ENCODE measurements at regions of chr10 and their contacts with region 1.

Region 1: GRCh38 chr10:38094158-38094920 is at the start of gene ZNF37A:
- DNase-seq: peak; percentile 94
- H3K4me3 Mint-ChIP-seq: peak within 1 kb of the TSS; percentile 84
- H3K27ac Mint-ChIP-seq: peak within 1 kb of the TSS; percentile 81
- H3K4me1 Mint-ChIP-seq: peaks cover 22% of the 10 kb centered on the region
- H3K27me3 Mint-ChIP-seq: no peaks in the 10 kb centered on the region
- total RNA-seq, gene ZNF37A: 19.0 to 21.0 TPM

Region 2: GRCh38 chr10:36888929-36889573 is 1205.3 kb before region 1 on chr10:
- CTCF ChIA-PET with region 1: no interaction called
- POLR2A ChIA-PET with region 1: no interaction called
- intact Hi-C with region 1: loop called (anchors 5 kb)
- DNase-seq: peak; percentile 62
- H3K4me3 Mint-ChIP-seq: no peak overlapping the region
- H3K27ac Mint-ChIP-seq: no peak overlapping the region
- H3K4me1 Mint-ChIP-seq: no peaks in the 10 kb centered on the region
- H3K27me3 Mint-ChIP-seq: no peaks in the 10 kb centered on the region

Region 3: DNA sequence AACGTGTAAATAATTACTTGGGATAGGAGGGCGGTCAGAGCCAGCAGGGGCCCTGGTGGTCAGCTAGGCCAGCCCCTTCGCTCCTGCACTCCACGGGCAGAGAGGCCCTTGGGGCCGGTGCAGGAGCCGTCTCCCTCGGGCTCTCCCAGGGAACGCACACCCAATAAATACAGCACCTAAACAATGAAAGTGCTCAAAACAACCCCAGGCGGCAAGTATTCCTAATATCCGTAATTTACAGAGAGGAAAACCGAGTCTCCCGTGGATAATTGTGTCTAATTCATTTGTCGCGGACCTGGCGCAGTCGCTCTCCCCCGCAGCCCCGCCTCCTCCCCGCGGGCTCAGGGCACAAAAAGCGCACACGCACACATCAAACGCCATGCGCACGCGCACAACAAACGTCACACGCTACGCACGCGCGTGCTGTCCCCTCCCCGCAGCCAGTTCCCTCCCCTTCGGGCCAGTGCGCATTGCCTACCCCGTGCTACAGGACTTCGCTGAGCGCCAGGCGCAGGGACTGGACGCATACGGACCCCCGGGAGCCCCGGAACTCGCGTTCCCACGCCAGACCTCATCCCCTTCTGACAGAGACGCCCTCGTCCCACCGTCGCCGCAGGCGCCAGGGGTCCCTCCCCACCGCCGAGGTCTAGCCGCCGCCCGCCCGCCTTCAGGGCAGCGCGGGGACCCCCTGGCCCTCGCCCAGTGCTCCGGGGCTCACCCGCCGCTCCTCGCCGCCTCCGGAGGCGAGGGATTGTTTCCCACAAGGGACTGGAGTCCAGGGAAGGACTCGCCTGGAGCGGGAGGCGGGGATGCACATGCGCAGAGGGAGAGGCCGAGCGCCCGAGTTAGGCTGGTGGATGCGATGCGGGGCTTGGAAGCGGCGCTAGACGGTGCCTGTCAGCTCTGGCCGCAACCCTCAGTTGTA is 236.8 kb before region 1 on chr10 and contains the start of gene ZNF248:
- CTCF ChIA-PET with region 1: no interaction called
- POLR2A ChIA-PET with region 1: no interaction called
- intact Hi-C with region 1: loop called (anchors 1 kb)
- DNase-seq: peak; percentile 95
- H3K4me3 Mint-ChIP-seq: peak within 1 kb of the TSS; percentile 96
- H3K27ac Mint-ChIP-seq: peak within 1 kb of the TSS; percentile 94
- H3K4me1 Mint-ChIP-seq: peaks cover 37% of the 10 kb centered on the region
- H3K27me3 Mint-ChIP-seq: peaks cover 1% of the 10 kb centered on the region
- total RNA-seq, gene ZNF248: 6.1 to 7.4 TPM

Region 4: DNA sequence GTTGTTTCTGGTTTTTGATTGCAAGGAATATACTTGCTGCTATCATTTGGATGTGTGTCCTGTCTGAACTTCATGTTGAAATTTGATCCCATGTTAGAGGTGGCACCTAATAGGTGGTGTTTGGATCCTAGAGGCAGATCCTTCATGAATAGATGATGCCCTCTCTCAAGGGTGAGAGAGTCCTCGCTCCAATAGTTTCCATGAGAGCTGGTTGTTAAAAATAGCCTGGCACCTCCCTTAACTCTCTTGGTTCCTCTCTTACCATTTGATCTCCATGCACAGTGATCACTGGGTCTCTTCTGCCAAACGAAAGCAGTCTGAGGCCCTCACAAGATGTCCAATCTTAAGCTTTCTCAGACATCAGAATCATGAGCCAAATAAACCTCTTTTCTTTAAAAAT is 188.0 kb before region 1 on chr10:
- CTCF ChIA-PET with region 1: no interaction called
- POLR2A ChIA-PET with region 1: no interaction called
- intact Hi-C with region 1: no loop called
- DNase-seq: no peak
- H3K4me3 Mint-ChIP-seq: no peak overlapping the region
- H3K27ac Mint-ChIP-seq: no peak overlapping the region
- H3K4me1 Mint-ChIP-seq: no peaks in the 10 kb centered on the region
- H3K27me3 Mint-ChIP-seq: no peaks in the 10 kb centered on the region

Region 5: GRCh38 chr10:37976091-37976879 is 118.1 kb before region 1 on chr10 and contains the start of gene ZNF25:
- CTCF ChIA-PET with region 1: interaction called, 17 read pairs
- POLR2A ChIA-PET with region 1: interaction called, 4 read pairs
- intact Hi-C with region 1: loop called (anchors 1 kb)
- DNase-seq: peak; percentile 99
- H3K4me3 Mint-ChIP-seq: peak within 1 kb of the TSS; percentile 92
- H3K27ac Mint-ChIP-seq: peak within 1 kb of the TSS; percentile 94
- H3K4me1 Mint-ChIP-seq: peaks cover 15% of the 10 kb centered on the region
- H3K27me3 Mint-ChIP-seq: no peaks in the 10 kb centered on the region
- total RNA-seq, gene ZNF25: 7.4 to 8.8 TPM

Region 6: GRCh38 chr10:38010119-38010903 is 84.0 kb before region 1 on chr10 and contains the start of gene ZNF33A:
- CTCF ChIA-PET with region 1: no interaction called
- POLR2A ChIA-PET with region 1: interaction called, 9 read pairs
- intact Hi-C with region 1: loop called (anchors 1 kb)
- DNase-seq: peak; percentile 95
- H3K4me3 Mint-ChIP-seq: peak within 1 kb of the TSS; percentile 91
- H3K27ac Mint-ChIP-seq: peak within 1 kb of the TSS; percentile 99
- H3K4me1 Mint-ChIP-seq: peaks cover 29% of the 10 kb centered on the region
- H3K27me3 Mint-ChIP-seq: no peaks in the 10 kb centered on the region
- total RNA-seq, gene ZNF33A: 20.8 to 21.5 TPM

Region 7: GRCh38 chr10:38038107-38038931 is 56.0 kb before region 1 on chr10:
- CTCF ChIA-PET with region 1: no interaction called
- POLR2A ChIA-PET with region 1: no interaction called
- intact Hi-C with region 1: loop called (anchors 1 kb)
- DNase-seq: peak; percentile 13
- H3K4me3 Mint-ChIP-seq: peak overlapping the region; percentile 75
- H3K27ac Mint-ChIP-seq: peak overlapping the region; percentile 92
- H3K4me1 Mint-ChIP-seq: peaks cover 36% of the 10 kb centered on the region
- H3K27me3 Mint-ChIP-seq: no peaks in the 10 kb centered on the region

Region 8: DNA sequence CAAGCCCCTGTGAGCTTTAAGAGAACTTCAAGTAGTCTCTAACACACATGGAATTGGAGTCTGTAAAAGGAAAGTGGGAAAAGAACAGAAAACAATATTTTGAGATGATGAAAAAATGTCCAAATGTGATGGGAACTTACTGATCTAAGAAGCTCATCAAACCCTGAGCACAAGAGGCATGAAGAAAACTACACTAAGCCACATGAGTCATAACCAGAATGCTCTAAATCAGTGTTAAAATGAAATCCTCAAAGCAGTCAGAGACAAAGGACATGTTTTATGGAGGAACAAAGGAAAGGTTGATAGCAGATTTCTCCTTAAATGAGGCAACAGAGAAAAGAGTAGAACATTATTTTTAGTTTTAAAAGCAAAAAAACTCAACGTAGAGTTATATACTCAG is 46.7 kb before region 1 on chr10:
- CTCF ChIA-PET with region 1: no interaction called
- POLR2A ChIA-PET with region 1: no interaction called
- intact Hi-C with region 1: loop called (anchors 2 kb)
- DNase-seq: no peak
- H3K4me3 Mint-ChIP-seq: no peak overlapping the region
- H3K27ac Mint-ChIP-seq: no peak overlapping the region
- H3K4me1 Mint-ChIP-seq: peaks cover 25% of the 10 kb centered on the region
- H3K27me3 Mint-ChIP-seq: no peaks in the 10 kb centered on the region

Region 9: DNA sequence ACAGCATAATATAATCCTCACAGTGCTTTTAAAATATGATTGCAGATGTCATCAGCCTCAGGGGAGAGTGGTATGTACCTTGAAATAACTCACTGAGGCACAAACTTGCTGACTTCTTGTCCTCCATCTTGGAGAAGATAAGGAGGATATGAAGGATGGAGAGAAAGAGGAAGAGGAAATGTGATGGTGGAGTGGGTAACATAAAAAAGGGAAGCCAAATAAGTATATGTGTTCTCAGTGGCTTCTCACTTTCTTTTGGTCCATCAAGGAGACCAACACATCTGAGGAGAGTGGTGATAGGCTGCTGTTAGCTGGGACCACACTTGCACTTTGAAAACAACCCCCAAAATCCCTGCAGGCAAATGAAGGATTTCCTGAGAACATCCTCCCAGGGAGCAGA is 21.8 kb before region 1 on chr10:
- CTCF ChIA-PET with region 1: no interaction called
- POLR2A ChIA-PET with region 1: no interaction called
- intact Hi-C with region 1: no loop called
- DNase-seq: no peak
- H3K4me3 Mint-ChIP-seq: no peak overlapping the region
- H3K27ac Mint-ChIP-seq: no peak overlapping the region
- H3K4me1 Mint-ChIP-seq: peaks cover 4% of the 10 kb centered on the region
- H3K27me3 Mint-ChIP-seq: peaks cover 2% of the 10 kb centered on the region